H1 (cell line): ENCODE measurements at regions of chr7 and their contacts with region 1.

Region 1: GRCh38 chr7:117830422-117830954 is 42.8 kb downstream of the CTTNBP2 start:
- DNase-seq: no peak
- H3K4me3 ChIP-seq: no peak overlapping the region
- H3K27ac ChIP-seq: no peak overlapping the region
- H3K4me1 ChIP-seq: peaks cover 2 to 7% (median 6%) of the 10 kb centered on the region in 4 experiments; a peak in 4 of 7 replicates
- H3K27me3 ChIP-seq: no peaks in the 10 kb centered on the region
- CTCF ChIP-seq: no peak
- EP300 ChIP-seq: no peak
- POLR2A ChIP-seq: no peak
- RAD21 ChIP-seq: no peak

Region 2: DNA sequence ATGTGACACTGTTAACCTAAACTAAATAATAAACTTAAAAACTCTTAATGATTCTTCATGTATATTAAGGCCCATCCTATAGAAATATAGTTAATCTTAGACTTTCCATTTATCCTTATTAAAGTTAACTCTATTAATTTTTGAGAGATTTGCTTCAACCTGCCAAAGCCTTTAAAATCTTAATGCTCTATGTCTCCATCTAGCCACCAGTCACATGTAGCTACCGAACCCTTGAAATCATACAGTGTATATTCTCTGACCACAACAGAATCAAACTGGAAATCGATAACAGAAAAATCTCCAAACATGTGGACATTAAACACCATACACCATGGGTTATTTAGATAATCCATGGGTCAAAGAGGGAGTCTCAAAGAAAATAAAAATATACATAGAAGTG is 455.1 kb before region 1 on chr7:
- CTCF ChIA-PET with region 1: no interaction called
- POLR2A ChIA-PET with region 1: no interaction called
- DNase-seq: no peak
- H3K4me3 ChIP-seq: no peak overlapping the region
- H3K27ac ChIP-seq: no peak overlapping the region
- H3K4me1 ChIP-seq: no peaks in the 10 kb centered on the region
- H3K27me3 ChIP-seq: no peaks in the 10 kb centered on the region
- CTCF ChIP-seq: peak in 1 of 3 experiments; percentile 6; a peak in 1 of 4 replicates
- EP300 ChIP-seq: no peak
- POLR2A ChIP-seq: no peak
- RAD21 ChIP-seq: peak in 1 of 2 experiments; percentile 25; a peak in 1 of 4 replicates

Region 3: GRCh38 chr7:117780832-117781231 is 49.7 kb before region 1 on chr7:
- CTCF ChIA-PET with region 1: interaction called, 11 read pairs
- POLR2A ChIA-PET with region 1: interaction called, 3 read pairs
- DNase-seq: no peak
- H3K4me3 ChIP-seq: no peak overlapping the region
- H3K27ac ChIP-seq: no peak overlapping the region
- H3K4me1 ChIP-seq: no peaks in the 10 kb centered on the region
- H3K27me3 ChIP-seq: no peaks in the 10 kb centered on the region
- CTCF ChIP-seq: no peak
- EP300 ChIP-seq: no peak
- POLR2A ChIP-seq: no peak
- RAD21 ChIP-seq: no peak